ENCODE measurements at regions of chr1 and their contacts with region 1.

Region 1: GRCh38 chr1:74733604-74734484 is 892 bp downstream of the TYW3 start:
- DNase-seq: no peak
- ATAC-seq: peak; percentile 61
- H3K4me3 Mint-ChIP-seq: peak overlapping the region; percentile 96
- H3K27ac Mint-ChIP-seq: peak overlapping the region; percentile 97
- H3K4me1 Mint-ChIP-seq: peaks cover 40% of the 10 kb centered on the region
- H3K27me3 Mint-ChIP-seq: no peaks in the 10 kb centered on the region
- CTCF ChIP-seq: no peak

Region 2: DNA sequence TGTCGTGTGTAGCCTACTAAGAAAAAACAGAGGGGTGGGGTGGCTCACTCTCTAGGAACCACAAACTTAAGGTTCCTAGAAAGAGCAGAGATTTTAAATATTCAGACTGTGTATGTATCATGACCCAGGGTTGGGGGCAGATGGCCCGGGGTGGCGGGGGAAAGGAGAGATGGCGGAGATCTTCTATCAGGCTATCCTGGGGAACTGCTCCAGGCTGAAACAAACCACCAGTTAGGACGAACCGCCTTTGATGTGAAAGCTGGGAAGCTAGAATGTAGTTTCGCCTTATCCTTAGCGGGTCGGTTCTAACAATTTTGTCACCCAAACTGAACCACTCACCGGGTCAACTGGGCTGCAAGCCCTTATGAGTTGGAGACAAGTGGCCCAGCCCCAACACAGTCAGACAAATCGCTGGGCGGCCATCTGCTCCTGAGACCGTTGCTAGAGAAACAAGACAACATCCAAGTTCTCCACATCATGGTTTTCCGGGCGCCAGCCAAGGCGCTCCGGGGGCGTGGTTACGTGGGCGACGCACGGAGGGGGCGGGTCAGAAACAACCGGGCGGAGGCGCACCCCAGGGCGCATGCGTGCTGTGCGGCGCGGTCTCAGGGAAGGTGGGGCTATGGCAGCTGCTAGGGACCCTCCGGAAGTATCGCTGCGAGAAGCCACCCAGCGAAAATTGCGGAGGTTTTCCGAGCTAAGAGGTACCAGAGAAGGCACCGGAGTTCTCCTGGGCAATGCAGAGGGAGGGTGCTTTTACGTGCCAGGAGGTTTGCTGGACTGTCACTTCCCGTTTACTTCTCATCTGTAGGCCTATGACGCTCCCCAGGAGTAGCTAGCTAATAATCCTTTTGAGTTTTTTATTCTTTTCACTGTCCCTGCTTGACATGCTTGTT is 535.9 kb before region 1 on chr1 and contains the starts of genes FPGT and LRRIQ3:
- CTCF ChIA-PET with region 1: interaction called, 3 read pairs
- POLR2A ChIA-PET with region 1: interaction called, 12 read pairs
- intact Hi-C with region 1: loop called (anchors 1 kb)
- DNase-seq: peak; percentile 94
- ATAC-seq: peak; percentile 96
- H3K4me3 Mint-ChIP-seq: peak within 1 kb of the TSS; percentile 87
- H3K27ac Mint-ChIP-seq: peak within 1 kb of the TSS; percentile 92
- H3K4me1 Mint-ChIP-seq: peaks cover 27% of the 10 kb centered on the region
- H3K27me3 Mint-ChIP-seq: no peaks in the 10 kb centered on the region
- CTCF ChIP-seq: no peak
- total RNA-seq, gene FPGT: 10.1 and 12.0 TPM in 2 replicates
- total RNA-seq, gene LRRIQ3: 1.00 and 1.5 TPM in 2 replicates

Region 3: GRCh38 chr1:74699331-74699730 is 34.5 kb before region 1 on chr1:
- CTCF ChIA-PET with region 1: no interaction called
- POLR2A ChIA-PET with region 1: no interaction called
- intact Hi-C with region 1: no loop called
- DNase-seq: no peak
- ATAC-seq: no peak
- H3K4me3 Mint-ChIP-seq: no peak overlapping the region
- H3K27ac Mint-ChIP-seq: no peak overlapping the region
- H3K4me1 Mint-ChIP-seq: no peaks in the 10 kb centered on the region
- H3K27me3 Mint-ChIP-seq: no peaks in the 10 kb centered on the region
- CTCF ChIP-seq: no peak

Measured in activated B cell treated with CpG ODN at 0.5 μM for 24 hours (primary cell).